Thyroid gland (tissue), 4 donors: ENCODE measurements at regions of chr10 and their contacts with region 1.

Region 1: GRCh38 chr10:101139421-101139911 is 8.4 kb downstream of the TLX1 start:
- DNase-seq: no peak
- H3K4me3 ChIP-seq: no peak overlapping the region
- H3K27ac ChIP-seq: no peak overlapping the region
- H3K4me1 ChIP-seq: peaks cover under 1 to 23% of the 10 kb centered on the region in 2 donors
- H3K27me3 ChIP-seq: peaks cover 44% of the 10 kb centered on the region
- CTCF ChIP-seq: peak in 1 of 6 experiments; percentile 15
- POLR2A ChIP-seq: no peak

Region 2: GRCh38 chr10:100998991-100999741 is 140.3 kb before region 1 on chr10:
- intact Hi-C with region 1: no loop called
- DNase-seq: peak; percentile 79 to 82
- H3K4me3 ChIP-seq: peak overlapping the region; percentile 18 to 81 (median 62)
- H3K27ac ChIP-seq: peak overlapping the region; percentile 99 to 100 (median 99)
- H3K4me1 ChIP-seq: peaks cover 29 to 39% of the 10 kb centered on the region in 2 donors
- H3K27me3 ChIP-seq: no peaks in the 10 kb centered on the region
- CTCF ChIP-seq: peak; percentile 77 to 96 (median 94)
- POLR2A ChIP-seq: peak; percentile 85 to 95

Region 3: GRCh38 chr10:101067356-101068083 is 71.9 kb before region 1 on chr10:
- intact Hi-C with region 1: no loop called
- DNase-seq: peak; percentile 76 to 78
- H3K4me3 ChIP-seq: peak overlapping the region; percentile 15 to 51 (median 22)
- H3K27ac ChIP-seq: peak overlapping the region in 2 of 3 donors; percentile 22 to 56
- H3K4me1 ChIP-seq: peaks cover 26 to 34% of the 10 kb centered on the region in 2 donors
- H3K27me3 ChIP-seq: no peaks in the 10 kb centered on the region
- CTCF ChIP-seq: peak; percentile 62 to 88 (median 86)
- POLR2A ChIP-seq: peak in 1 of 2 donors; percentile 12

Region 4: GRCh38 chr10:101095542-101096213 is 43.8 kb before region 1 on chr10:
- intact Hi-C with region 1: loop called (anchors 5 kb)
- DNase-seq: peak; percentile 67 to 70
- H3K4me3 ChIP-seq: no peak overlapping the region
- H3K27ac ChIP-seq: no peak overlapping the region
- H3K4me1 ChIP-seq: no peaks in the 10 kb centered on the region
- H3K27me3 ChIP-seq: no peaks in the 10 kb centered on the region
- CTCF ChIP-seq: peak; percentile 31 to 82 (median 68)
- POLR2A ChIP-seq: no peak

Region 5: DNA sequence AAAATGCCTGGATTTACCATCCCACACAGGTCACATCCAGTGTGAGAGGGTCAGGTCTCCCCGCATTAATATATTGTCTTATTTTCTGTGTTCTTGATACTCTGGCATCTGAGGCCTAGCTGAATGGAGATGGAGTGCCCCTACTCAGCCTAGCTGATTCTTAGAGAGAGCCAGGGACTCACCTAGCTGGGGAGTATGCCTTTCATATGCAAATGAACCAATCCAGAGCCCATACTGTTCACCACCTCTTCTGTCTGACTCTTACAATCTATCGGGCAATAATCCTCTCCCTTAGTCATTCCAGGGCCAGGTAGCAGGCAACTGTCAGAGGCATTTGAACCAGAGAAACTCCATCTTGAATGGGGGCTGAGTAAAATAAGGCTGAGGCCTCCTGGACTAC is 43.5 kb after region 1 on chr10:
- intact Hi-C with region 1: no loop called
- DNase-seq: no peak
- H3K4me3 ChIP-seq: no peak overlapping the region
- H3K27ac ChIP-seq: no peak overlapping the region
- H3K4me1 ChIP-seq: no peaks in the 10 kb centered on the region
- H3K27me3 ChIP-seq: no peaks in the 10 kb centered on the region
- CTCF ChIP-seq: no peak
- POLR2A ChIP-seq: no peak

Region 6: GRCh38 chr10:101258179-101258885 is 118.9 kb after region 1 on chr10:
- intact Hi-C with region 1: no loop called
- DNase-seq: no peak
- H3K4me3 ChIP-seq: no peak overlapping the region
- H3K27ac ChIP-seq: no peak overlapping the region
- H3K4me1 ChIP-seq: no peaks in the 10 kb centered on the region
- H3K27me3 ChIP-seq: no peaks in the 10 kb centered on the region
- CTCF ChIP-seq: no peak
- POLR2A ChIP-seq: no peak